OCI-LY7 (cell line): ENCODE measurements at regions of chr4 and their contacts with region 1.

Region 1: DNA sequence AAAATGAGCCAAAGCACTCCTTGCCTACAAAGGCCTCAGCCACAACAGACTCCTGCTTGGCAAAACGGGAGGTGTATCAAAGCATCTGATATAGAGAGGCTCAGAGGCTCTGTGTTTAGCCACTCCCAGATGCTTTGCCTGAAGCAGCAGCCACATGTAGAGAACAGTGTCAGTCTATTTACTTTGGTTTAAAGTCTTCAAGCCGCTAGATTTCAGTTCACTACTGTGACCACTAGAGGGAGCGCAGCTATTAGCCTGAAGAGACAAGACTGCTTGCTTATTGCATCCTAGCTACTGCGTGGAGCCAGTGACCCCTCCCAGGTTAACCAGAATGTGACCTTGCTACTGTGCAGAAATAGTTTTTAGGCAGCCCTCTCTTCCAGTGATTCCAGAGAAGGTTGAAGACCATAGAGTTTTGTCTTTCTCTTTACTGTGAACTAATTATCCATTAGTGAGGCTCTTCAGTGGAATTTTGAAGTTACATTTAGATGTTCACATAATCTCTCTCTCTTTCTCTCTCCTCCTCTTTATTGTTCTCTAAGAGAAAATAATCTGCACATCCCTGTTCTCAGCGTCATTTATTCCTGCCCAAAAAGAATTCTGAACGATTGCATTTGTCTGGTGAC is 39.3 kb downstream of the BMP3 start:
- DNase-seq: peak; percentile 92
- H3K4me3 ChIP-seq: no peak overlapping the region
- H3K27ac ChIP-seq: no peak overlapping the region
- H3K4me1 ChIP-seq: peaks cover 8% of the 10 kb centered on the region
- CTCF ChIP-seq: peak; percentile 97

Region 2: DNA sequence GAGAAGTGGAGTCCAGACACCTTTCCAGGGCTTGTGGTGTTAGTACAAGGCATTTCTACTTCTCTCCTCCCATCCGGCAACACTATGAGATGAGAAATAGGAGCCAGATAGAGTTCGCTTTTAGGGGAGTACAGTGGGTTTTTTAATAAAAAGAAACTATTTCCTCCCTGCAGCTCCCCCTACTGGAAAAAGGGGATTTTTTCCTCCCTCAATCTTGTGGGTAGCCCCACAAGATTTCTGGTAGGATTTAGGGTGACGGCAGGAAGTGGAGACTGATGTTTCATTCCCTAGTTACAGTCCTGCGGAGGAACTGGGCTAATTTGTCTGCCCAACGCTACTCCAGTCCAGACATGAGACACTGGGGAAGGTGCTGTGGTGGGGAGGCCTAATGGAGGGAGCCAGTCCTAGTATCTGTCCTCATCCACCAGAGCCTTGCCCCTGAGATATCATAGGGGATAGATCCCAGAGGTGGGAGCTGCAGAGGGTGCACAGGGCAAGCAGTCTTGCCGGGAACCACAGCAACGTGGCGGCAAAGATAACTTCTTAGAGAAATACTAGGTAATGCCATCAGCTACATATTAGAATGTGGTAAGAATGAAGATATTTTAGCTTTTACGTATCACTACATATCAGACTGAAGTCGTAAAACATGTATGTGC is 190.8 kb after region 1 on chr4:
- CTCF ChIA-PET with region 1: no interaction called
- POLR2A ChIA-PET with region 1: no interaction called
- intact Hi-C with region 1: loop called (anchors 5 kb)
- DNase-seq: peak; percentile 37
- H3K4me3 ChIP-seq: no peak overlapping the region
- H3K27ac ChIP-seq: no peak overlapping the region
- H3K4me1 ChIP-seq: no peaks in the 10 kb centered on the region
- CTCF ChIP-seq: peak; percentile 78

Region 3: GRCh38 chr4:81351654-81352445 is 282.0 kb after region 1 on chr4:
- CTCF ChIA-PET with region 1: interaction called, 7 read pairs
- POLR2A ChIA-PET with region 1: interaction called, 3 read pairs
- intact Hi-C with region 1: loop called (anchors 1 kb)
- DNase-seq: peak; percentile 82
- H3K4me3 ChIP-seq: no peak overlapping the region
- H3K27ac ChIP-seq: no peak overlapping the region
- H3K4me1 ChIP-seq: no peaks in the 10 kb centered on the region
- CTCF ChIP-seq: peak; percentile 99